ENCODE measurements at regions of chr10 and their contacts with region 1.

Region 1: GRCh38 chr10:95246579-95247051 is 44.2 kb downstream of the PDLIM1 start:
- H3K4me3 ChIP-seq: no peak overlapping the region
- H3K27ac ChIP-seq: no peak overlapping the region
- H3K4me1 ChIP-seq: no peaks in the 10 kb centered on the region
- CTCF ChIP-seq: peak; percentile 69

Region 2: DNA sequence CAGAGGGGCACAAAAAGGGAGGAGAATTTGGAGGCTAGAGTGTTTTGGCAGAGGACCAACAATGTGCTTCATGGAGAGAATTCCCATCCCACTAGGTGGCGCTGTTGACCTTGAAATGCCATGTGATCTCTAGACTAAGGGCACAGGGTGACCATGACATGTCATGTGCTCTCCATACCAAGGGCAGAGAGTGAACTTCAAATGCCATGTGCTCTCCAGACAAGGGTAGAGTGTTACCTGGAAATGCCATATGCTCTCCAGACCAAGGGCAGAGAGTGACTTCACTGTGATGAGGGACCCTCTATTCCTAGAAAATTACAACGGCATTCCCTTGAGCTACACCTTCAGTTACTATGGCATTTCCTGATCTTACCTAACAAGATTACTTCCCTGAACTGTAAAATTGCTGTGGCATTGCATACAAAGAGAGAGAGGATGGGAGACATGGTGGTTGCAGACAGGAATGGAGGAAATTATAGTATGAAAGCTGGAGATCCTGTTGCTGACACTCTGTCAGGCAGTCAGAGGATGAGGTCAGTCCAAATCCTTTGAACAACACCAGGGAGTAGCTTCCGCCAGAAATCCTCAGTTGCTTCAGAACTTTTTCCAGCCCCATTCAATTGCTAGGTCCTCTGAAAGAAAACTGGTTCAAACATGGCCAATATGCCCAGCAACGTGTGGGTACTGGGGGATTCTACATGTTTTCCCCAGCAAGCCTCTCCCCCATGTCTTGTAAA is 113.4 kb before region 1 on chr10:
- CTCF ChIA-PET with region 1: interaction called, 38 read pairs
- POLR2A ChIA-PET with region 1: no interaction called
- H3K4me3 ChIP-seq: no peak overlapping the region
- H3K27ac ChIP-seq: no peak overlapping the region
- H3K4me1 ChIP-seq: no peaks in the 10 kb centered on the region
- CTCF ChIP-seq: peak; percentile 81

Region 3: DNA sequence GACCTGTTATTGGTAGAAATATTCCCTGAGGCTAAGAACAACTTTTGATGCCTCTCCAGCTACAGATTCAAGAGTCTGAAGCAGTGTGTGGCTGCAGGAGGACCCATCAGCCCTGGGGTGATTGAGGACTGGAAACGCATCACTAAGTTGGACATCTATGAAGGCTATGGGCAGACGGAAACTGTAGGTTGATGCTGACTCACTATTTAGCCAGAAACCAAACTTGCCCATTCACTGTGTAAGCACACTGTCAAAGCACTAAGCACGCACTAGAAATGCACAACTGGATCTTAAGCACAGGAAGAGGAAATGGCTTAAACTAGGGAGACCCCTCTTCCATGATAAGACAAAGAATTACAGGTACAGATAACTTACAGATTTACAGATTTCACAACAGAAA is 31.8 kb before region 1 on chr10:
- CTCF ChIA-PET with region 1: interaction called, 11 read pairs
- POLR2A ChIA-PET with region 1: no interaction called
- H3K4me3 ChIP-seq: no peak overlapping the region
- H3K27ac ChIP-seq: no peak overlapping the region
- H3K4me1 ChIP-seq: no peaks in the 10 kb centered on the region; the same call in 1 of the 2 replicates
- CTCF ChIP-seq: no peak

Region 4: GRCh38 chr10:95260397-95260881 is 13.8 kb after region 1 on chr10:
- CTCF ChIA-PET with region 1: interaction called, 13 read pairs
- POLR2A ChIA-PET with region 1: interaction called, 3 read pairs
- H3K4me3 ChIP-seq: no peak overlapping the region
- H3K27ac ChIP-seq: no peak overlapping the region
- H3K4me1 ChIP-seq: peaks cover 7% of the 10 kb centered on the region
- CTCF ChIP-seq: no peak

Region 5: DNA sequence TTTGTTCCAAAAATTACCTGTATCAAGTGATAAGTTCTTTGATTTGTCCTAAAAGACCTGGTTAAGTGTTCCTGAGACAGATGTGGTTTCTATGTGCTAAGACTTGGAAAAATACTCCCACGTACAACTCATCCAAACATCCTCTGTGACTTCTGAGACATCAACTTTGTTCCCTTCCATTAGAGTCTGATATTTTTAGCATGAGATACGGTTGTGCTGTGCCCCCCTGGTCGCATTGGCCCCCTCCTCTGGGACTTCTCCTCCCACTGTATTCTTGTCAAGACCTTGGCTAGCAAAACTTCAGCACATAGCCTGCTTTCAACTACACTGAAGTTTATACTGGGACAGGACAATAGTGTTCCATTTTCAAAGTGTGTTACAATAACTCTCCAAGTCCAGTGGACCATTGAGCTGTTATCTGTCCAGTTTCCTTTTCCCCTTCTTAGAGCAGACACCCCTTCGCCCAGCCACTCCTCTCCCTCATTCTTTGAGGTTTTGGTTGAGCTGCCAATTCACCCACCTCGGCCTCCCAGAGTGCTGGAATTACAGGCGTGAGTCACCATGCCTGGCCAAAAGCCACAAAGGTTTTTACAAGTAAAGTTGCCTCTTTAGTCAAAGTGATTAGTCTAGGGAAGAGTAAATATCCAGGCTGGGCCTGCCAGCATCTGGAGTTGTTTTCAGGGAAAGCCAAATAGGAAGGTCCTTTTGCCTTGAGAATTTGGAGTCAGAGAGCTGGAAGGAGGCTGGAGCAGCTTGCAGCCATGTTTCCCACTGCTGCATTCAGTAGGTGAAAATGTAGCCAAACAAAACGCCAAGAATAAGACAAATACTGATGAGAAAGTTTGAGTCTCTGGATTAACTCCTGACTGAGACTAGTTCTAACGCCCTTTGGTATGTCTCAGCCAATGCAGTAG is 62.0 kb after region 1 on chr10:
- CTCF ChIA-PET with region 1: interaction called, 11 read pairs
- POLR2A ChIA-PET with region 1: interaction called, 3 read pairs
- H3K4me3 ChIP-seq: no peak overlapping the region
- H3K27ac ChIP-seq: peak overlapping the region; percentile 42
- H3K4me1 ChIP-seq: peaks cover 25% of the 10 kb centered on the region
- CTCF ChIP-seq: no peak

Measured in HEK293 (cell line).